ENCODE measurements at regions of chr17 and their contacts with region 1.

Region 1: GRCh38 chr17:31900877-31901276 is 631 bp downstream of the UTP6 start:
- DNase-seq: peak; percentile 34
- H3K4me3 ChIP-seq: peak overlapping the region; percentile 92
- H3K27ac ChIP-seq: peak overlapping the region; percentile 42
- H3K4me1 ChIP-seq: peaks cover 19% of the 10 kb centered on the region
- CTCF ChIP-seq: no peak

Region 2: GRCh38 chr17:31558748-31559644 is 341.9 kb before region 1 on chr17:
- CTCF ChIA-PET with region 1: no interaction called
- POLR2A ChIA-PET with region 1: interaction called, 3 read pairs
- intact Hi-C with region 1: loop called (anchors 5 kb)
- DNase-seq: peak; percentile 75
- H3K4me3 ChIP-seq: peak overlapping the region; percentile 69
- H3K27ac ChIP-seq: no peak overlapping the region
- H3K4me1 ChIP-seq: peaks cover 42% of the 10 kb centered on the region
- CTCF ChIP-seq: peak; percentile 95

Region 3: DNA sequence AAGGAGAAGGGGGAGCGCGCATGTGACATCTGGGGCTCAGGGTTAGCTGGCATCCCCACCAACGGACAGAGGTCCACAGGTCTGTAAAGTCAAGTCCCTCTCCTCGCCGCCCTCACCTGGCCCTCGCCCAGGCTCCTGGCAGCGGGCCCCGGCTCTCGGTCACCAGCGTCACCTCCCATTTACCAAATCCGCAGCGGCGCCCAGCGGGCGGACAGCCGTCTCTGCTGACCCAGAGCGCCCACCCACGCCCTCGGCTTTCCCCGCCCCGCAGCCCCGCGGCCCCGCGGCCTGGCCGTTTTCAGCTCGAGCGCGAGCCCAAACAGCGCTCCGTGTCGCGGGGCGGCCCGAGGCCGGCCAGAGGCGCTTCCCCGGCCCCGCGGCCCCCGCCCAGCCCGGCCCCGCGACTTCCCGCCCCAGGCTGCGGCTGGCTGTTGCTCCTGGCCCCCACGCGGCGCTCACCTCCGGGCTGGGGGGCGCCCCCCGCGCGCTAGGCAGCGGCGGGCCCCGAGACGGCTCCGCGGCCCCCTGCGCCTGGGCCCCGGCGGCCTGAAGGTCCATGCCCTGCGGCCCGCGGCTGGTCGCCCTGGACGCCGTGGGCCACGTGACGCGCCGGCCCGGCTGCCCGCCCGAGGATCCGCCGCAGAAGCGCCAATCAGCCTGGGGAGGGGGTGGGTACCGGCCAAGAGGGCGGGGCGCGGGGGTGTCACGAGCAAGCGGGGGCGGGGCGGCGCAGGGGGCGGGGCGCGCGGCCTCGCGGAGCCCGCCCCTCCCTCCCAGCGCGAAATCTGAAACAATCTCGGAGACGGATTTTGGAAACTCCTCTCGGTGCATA is 42.0 kb before region 1 on chr17 and contains the start of gene COPRS:
- CTCF ChIA-PET with region 1: no interaction called
- POLR2A ChIA-PET with region 1: interaction called, 4 read pairs
- intact Hi-C with region 1: loop called (anchors 2 kb)
- DNase-seq: peak; percentile 88
- H3K4me3 ChIP-seq: peak within 1 kb of the TSS; percentile 76
- H3K27ac ChIP-seq: no peak within 1 kb of the TSS
- H3K4me1 ChIP-seq: peaks cover 18% of the 10 kb centered on the region
- CTCF ChIP-seq: no peak
- total RNA-seq, gene COPRS: 50.7 and 64.3 TPM in 2 replicates

Region 4: DNA sequence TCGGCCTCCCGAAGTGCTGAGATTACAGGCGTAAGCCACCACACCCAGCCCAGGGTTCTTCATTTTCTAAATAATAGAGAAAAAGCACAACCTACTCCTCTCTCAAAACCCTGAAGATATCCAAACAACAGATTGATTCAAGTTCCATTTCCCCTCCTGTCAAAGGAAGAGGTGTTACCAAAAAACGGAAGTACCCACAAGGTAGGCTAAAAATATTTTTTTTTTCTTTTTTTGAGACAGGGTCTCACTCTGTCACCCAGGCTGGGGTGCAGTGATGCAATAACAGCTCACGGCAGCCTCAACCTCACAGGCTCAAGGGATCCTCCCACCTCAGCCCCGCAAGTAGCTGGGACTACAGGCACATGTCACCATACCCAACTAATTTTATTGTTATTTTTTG is 18.3 kb before region 1 on chr17:
- CTCF ChIA-PET with region 1: no interaction called
- POLR2A ChIA-PET with region 1: interaction called, 13 read pairs
- intact Hi-C with region 1: loop called (anchors 2 kb)
- DNase-seq: peak; percentile 81
- H3K4me3 ChIP-seq: peak overlapping the region; percentile 51
- H3K27ac ChIP-seq: peak overlapping the region; percentile 90
- H3K4me1 ChIP-seq: peaks cover 25% of the 10 kb centered on the region
- CTCF ChIP-seq: no peak

Region 5: GRCh38 chr17:31888124-31888523 is 12.8 kb before region 1 on chr17:
- CTCF ChIA-PET with region 1: no interaction called
- POLR2A ChIA-PET with region 1: interaction called, 13 read pairs
- intact Hi-C with region 1: loop called (anchors 1 kb)
- DNase-seq: peak; percentile 57
- H3K4me3 ChIP-seq: no peak overlapping the region
- H3K27ac ChIP-seq: peak overlapping the region; percentile 85
- H3K4me1 ChIP-seq: peaks cover 48% of the 10 kb centered on the region
- CTCF ChIP-seq: no peak

Region 6: DNA sequence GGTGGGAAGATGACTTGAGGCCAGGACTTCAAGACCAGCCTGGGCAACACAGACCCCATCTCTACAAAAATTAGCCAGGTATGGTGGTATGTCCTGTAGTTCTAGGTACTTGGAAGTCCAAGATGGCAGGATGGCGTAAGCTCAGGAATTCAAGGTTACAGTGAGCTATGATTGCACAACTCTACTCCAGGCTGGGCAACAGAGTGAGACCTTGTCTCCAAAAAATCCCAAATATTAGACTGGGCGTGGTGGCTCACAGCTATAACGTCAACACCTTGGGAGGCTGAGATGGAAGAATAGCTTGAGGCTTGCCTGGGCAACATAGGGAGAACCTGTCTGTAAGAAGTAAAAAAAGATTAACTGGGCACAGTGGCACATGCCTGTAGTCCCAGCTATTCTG is 66.8 kb after region 1 on chr17:
- CTCF ChIA-PET with region 1: no interaction called
- POLR2A ChIA-PET with region 1: no interaction called
- intact Hi-C with region 1: no loop called
- DNase-seq: no peak
- H3K4me3 ChIP-seq: no peak overlapping the region
- H3K27ac ChIP-seq: no peak overlapping the region
- H3K4me1 ChIP-seq: no peaks in the 10 kb centered on the region
- CTCF ChIP-seq: no peak

Measured in OCI-LY7 (cell line).